Heart left ventricle (tissue), 16 donors: ENCODE measurements at regions of chr3 and their contacts with region 1.

Region 1: DNA sequence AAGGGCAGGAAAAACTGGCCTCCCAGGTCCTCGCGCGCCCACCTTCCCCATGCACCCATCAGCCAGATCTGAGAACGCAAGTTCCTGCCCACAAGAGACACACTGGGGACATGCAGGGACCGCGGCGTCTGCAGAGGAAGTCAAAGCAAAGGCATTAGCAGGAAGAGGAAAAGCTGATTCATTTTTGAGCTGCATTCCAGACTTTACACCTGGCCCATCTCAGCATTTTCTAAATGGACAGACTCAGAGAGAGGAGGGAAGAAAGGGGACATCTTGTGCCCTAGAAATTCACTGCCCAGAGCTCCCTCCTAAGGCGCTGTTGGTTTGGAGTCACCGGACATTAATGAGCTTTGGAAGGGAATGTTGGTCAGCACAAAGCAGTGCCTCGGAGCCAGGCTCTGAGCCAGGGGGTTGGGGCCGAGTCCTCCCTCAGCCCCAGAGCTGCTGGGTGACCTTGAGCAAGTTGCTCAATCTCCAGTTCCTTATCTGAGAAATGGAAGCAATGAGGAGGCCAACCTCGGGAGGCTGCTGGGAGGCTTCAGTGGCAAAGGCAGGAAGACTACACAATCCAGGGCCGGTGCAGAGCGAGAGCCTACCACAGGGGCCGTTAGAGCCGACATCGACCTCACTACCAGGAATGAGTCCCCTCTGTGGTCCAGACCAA is 150.5 kb upstream of the IQSEC1 start:
- DNase-seq: peak in 2 of 5 donors; percentile 46 to 59
- ATAC-seq: peak; percentile 11 to 70 (median 42)
- H3K4me3 ChIP-seq: no peak overlapping the region
- H3K27ac ChIP-seq: peak overlapping the region in 5 of 12 donors; percentile 4 to 57 (median 39)
- H3K4me1 ChIP-seq: peaks cover 0 to 14% (median 8%) of the 10 kb centered on the region in 12 donors
- H3K27me3 ChIP-seq: no peaks in the 10 kb centered on the region
- CTCF ChIP-seq: no peak
- POLR2A ChIP-seq: no peak

Region 2: DNA sequence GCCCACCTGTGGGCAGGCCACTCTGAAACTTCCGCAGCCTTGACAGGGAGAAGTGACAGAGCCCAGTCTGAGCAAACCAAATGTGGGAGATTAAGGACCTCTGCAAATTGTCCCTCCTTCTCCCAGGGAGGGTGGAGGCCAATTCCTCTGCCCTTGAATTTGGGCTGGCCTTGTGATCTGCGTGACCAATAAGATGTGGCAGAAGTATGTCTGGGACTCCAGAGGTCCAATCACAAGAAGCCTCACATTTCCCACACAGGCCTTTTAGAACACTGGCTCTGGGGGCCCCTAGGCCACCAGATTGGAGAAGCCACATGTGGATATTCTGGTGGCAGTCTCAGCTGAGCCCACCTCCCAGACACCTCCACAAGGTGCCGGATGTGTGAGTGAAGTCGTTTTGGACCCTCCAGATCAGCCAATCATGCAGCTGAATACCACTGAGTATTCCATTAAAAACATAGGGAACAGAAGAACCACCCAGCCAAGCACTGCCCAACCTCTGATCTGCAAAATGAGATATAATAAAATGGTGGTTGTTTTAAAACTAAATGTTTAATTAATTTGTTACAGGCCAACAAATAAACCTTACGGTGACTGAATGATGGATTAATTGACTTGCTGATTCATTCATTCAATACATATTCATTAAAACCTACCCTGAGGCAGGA is 46.1 kb after region 1 on chr3:
- intact Hi-C with region 1: no loop called
- DNase-seq: no peak
- ATAC-seq: no peak
- H3K4me3 ChIP-seq: no peak overlapping the region
- H3K27ac ChIP-seq: no peak overlapping the region
- H3K4me1 ChIP-seq: peaks cover 0 to 3% (median 0%) of the 10 kb centered on the region in 12 donors
- H3K27me3 ChIP-seq: no peaks in the 10 kb centered on the region
- CTCF ChIP-seq: no peak
- POLR2A ChIP-seq: no peak

Region 3: GRCh38 chr3:13282986-13283876 is 59.5 kb after region 1 on chr3:
- intact Hi-C with region 1: loop called in 2 of 10 experiments (anchors 2 to 10 kb)
- DNase-seq: peak in 1 of 5 donors; percentile 41
- ATAC-seq: peak in 2 of 4 donors; percentile 27 to 50
- H3K4me3 ChIP-seq: peak overlapping the region in 11 of 12 donors; percentile 50 to 80 (median 66)
- H3K27ac ChIP-seq: peak overlapping the region in 6 of 12 donors; percentile 25 to 90 (median 82)
- H3K4me1 ChIP-seq: peaks cover 0 to 23% (median 9%) of the 10 kb centered on the region in 12 donors
- H3K27me3 ChIP-seq: peaks cover 6 to 50% (median 31%) of the 10 kb centered on the region in 9 donors
- CTCF ChIP-seq: peak in 11 of 12 donors; percentile 15 to 55 (median 35)
- POLR2A ChIP-seq: no peak